ENCODE measurements at regions of chr2 and their contacts with region 1.

Region 1: GRCh38 chr2:236430584-236430983 is 139.0 kb upstream of the ACKR3 start:
- DNase-seq: no peak
- ATAC-seq: no peak
- H3K4me3 ChIP-seq: no peak overlapping the region
- H3K27ac ChIP-seq: no peak overlapping the region
- H3K4me1 ChIP-seq: no peaks in the 10 kb centered on the region
- H3K27me3 ChIP-seq: peaks cover 0 to 2% (median 0%) of the 10 kb centered on the region in 7 donors
- CTCF ChIP-seq: no peak

Region 2: GRCh38 chr2:236117861-236118300 is 312.7 kb before region 1 on chr2:
- intact Hi-C with region 1: no loop called
- DNase-seq: no peak
- ATAC-seq: no peak
- H3K4me3 ChIP-seq: no peak overlapping the region
- H3K27ac ChIP-seq: no peak overlapping the region
- H3K4me1 ChIP-seq: no peaks in the 10 kb centered on the region
- H3K27me3 ChIP-seq: no peaks in the 10 kb centered on the region
- CTCF ChIP-seq: no peak

Region 3: DNA sequence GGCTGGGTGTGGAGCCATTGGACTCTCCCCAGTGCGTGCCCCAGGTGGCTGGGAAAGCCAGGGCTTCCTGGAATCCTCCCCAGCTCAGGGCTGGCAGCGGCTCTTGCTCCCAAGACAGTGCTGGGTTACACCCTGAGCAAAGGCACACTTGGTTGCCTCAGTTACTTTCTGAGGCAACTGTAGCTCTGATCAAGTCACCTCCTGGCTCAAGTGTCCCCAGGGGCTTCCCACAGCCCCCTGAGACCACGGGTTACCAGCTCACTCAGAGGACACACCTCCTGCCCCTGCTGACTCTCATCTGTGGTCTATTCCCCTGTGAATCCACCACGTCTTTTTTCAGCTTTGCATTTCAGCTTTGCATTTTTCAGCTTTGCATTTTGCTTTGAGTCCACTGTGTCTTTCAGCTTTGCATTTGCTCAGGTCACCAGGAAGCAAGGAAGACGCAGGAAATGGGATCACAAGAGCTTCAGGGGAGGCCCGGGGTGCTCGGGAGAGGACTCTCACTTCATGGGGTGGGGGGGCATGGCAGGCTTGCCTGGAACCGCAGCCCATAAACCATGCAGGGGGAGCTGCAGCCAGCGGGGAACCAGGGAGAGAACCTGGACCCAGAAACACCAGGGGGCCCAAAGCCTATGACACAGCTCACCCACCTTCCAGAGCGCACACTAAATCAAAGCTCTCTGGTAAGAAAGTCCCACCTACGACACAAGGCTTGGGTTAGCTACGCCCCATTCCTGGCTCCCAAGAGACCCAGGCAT is 28.4 kb before region 1 on chr2:
- intact Hi-C with region 1: loop called in 1 of 10 experiments (anchors 1 kb)
- DNase-seq: no peak
- ATAC-seq: no peak
- H3K4me3 ChIP-seq: no peak overlapping the region
- H3K27ac ChIP-seq: no peak overlapping the region
- H3K4me1 ChIP-seq: no peaks in the 10 kb centered on the region
- H3K27me3 ChIP-seq: peaks cover 0 to 3% (median 0%) of the 10 kb centered on the region in 7 donors
- CTCF ChIP-seq: no peak

Region 4: DNA sequence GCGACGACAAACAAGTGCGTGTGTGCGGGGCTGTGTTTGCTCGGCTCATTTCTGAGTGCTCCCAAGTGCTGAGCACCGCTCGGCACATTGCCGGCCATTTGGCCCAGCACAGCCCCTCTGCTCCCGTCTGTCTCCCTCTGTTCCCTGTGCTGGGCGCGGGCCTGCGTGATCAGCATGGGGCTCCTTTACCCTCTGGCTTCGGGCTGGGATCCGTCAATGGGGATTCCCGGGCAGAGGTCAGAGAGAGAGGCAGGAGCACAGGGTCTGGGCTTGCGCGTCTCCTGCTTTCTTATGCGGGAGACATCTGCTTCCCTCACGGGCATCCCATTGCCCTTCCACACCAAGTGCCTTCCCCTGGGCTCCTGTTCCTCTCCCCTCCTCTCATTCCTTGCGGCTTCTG is 373.0 kb after region 1 on chr2:
- intact Hi-C with region 1: no loop called
- DNase-seq: no peak
- ATAC-seq: no peak
- H3K4me3 ChIP-seq: no peak overlapping the region
- H3K27ac ChIP-seq: no peak overlapping the region
- H3K4me1 ChIP-seq: no peaks in the 10 kb centered on the region
- H3K27me3 ChIP-seq: peaks cover 0 to 13% (median 0%) of the 10 kb centered on the region in 7 donors
- CTCF ChIP-seq: no peak

Region 5: DNA sequence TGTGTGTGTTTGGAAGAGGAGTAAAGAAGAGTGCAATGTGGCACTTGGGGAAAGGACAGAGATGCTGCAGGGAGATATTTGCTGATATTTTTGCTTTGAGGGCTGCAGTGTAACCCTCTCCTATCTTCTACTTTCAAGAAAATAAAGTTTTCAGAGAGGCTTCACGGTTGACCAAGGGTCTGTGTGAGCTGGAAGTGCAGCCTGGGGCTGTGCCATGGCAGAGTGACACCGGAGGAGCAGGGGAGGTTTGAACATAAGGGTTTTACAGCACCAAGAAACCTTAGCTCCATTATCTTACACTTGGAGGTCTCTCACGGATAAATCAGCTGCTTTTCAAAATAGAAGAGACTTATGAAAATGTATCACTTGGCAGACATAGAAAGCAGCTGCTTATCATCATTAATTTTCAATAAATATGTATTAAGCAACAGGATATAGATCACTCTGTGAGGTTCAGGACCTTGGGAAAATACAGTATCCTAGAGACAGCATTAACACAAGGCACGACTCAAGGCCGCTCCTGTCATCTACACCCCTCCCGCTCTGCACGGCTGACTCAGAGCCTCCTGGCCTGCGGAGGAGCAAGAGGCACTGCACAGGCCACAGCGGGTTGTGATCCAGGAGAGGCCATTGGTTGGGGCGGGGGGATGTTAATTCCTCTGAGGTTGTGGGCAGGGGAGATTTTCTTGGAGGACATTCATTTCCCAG is 782.9 kb after region 1 on chr2:
- intact Hi-C with region 1: no loop called
- DNase-seq: peak in 1 of 2 donors; percentile 50
- ATAC-seq: peak in 7 of 8 donors; percentile 76 to 88 (median 80)
- H3K4me3 ChIP-seq: no peak overlapping the region
- H3K27ac ChIP-seq: peak overlapping the region in 6 of 10 donors; percentile 33 to 81 (median 58)
- H3K4me1 ChIP-seq: peaks cover 2 to 32% (median 20%) of the 10 kb centered on the region in 9 donors
- H3K27me3 ChIP-seq: no peaks in the 10 kb centered on the region
- CTCF ChIP-seq: no peak

Measured in heart right ventricle (tissue), 16 donors.